PC-9 (cell line): ENCODE measurements at regions of chr4 and their contacts with region 1.

Region 1: DNA sequence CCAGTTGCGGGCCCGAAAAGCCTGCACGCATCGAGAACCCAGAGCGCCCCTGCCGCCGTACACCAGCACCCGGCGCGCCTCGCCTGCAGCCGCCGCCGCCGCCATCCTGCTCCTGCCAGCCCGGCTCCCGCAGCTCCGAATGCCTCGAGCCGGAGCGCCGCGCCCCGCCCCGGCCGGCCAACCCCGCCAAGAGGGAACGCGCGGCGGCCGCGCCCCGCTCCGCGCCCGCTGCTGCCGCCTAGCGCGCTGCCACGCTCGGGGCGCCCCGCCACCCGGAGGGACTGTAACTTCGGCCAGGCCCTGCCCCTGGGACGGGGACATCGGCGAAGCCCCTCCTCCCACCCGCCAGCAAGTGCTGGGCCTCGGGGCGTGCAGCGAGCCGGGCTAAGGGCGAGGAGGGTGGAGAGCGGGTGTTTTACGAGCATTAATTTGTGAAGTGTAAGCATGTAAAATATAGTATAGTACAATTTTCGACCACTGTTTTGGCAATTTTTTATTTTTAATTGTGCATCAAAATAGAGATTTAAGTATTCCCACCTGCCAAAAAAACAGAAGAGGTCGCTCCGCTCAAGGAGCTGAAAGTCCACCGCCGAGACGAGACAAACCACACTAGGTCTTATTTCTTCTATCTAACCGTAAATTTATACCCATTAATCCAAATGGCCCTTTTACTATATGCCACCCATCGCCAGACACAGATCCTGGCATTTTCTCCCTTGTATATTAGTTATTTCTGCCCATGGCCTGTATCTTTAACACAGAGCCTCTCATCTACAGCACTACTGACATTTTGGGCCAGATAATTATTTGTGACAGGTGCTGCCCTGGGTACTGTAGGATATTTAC is at the start of gene QDPR:
- DNase-seq: peak; percentile 57 to 89
- H3K4me3 ChIP-seq: peak within 1 kb of the TSS; percentile 81
- H3K27ac ChIP-seq: no peak within 1 kb of the TSS
- H3K4me1 ChIP-seq: peaks cover 11% of the 10 kb centered on the region; the same call in 1 of the 2 replicates
- H3K27me3 ChIP-seq: peaks cover 15% of the 10 kb centered on the region; the same call in 1 of the 2 replicates
- CTCF ChIP-seq: peak; percentile 37; the same call in 1 of the 2 replicates
- total RNA-seq, gene QDPR: 14.0 and 27.8 TPM in 2 replicates

Region 2: GRCh38 chr4:18021722-18022571 is 509.8 kb after region 1 on chr4 and contains the start of gene LCORL:
- CTCF ChIA-PET with region 1: no interaction called
- POLR2A ChIA-PET with region 1: no interaction called
- intact Hi-C with region 1: loop called (anchors 5 kb)
- DNase-seq: peak; percentile 89 to 92
- H3K4me3 ChIP-seq: peak within 1 kb of the TSS; percentile 75
- H3K27ac ChIP-seq: peak within 1 kb of the TSS; percentile 63
- H3K4me1 ChIP-seq: peaks cover 7% of the 10 kb centered on the region
- H3K27me3 ChIP-seq: no peaks in the 10 kb centered on the region
- CTCF ChIP-seq: no peak; the same call in 1 of the 2 replicates
- total RNA-seq, gene LCORL: 13.8 and 22.9 TPM in 2 replicates